PC-9 (cell line): ENCODE measurements at regions of chr12 and their contacts with region 1.

Region 1: GRCh38 chr12:52980693-52981423 is 25.4 kb upstream of the EIF4B start:
- DNase-seq: peak; percentile 87 to 91
- H3K4me3 ChIP-seq: no peak overlapping the region
- H3K27ac ChIP-seq: no peak overlapping the region
- H3K4me1 ChIP-seq: peaks cover 26% of the 10 kb centered on the region
- H3K27me3 ChIP-seq: no peaks in the 10 kb centered on the region
- CTCF ChIP-seq: peak; percentile 98

Region 2: GRCh38 chr12:52372216-52373154 is 608.4 kb before region 1 on chr12:
- CTCF ChIA-PET with region 1: no interaction called
- POLR2A ChIA-PET with region 1: no interaction called
- intact Hi-C with region 1: loop called (anchors 1 kb)
- DNase-seq: peak; percentile 73 to 84
- H3K4me3 ChIP-seq: no peak overlapping the region
- H3K27ac ChIP-seq: no peak overlapping the region
- H3K4me1 ChIP-seq: peaks cover 9% of the 10 kb centered on the region
- H3K27me3 ChIP-seq: no peaks in the 10 kb centered on the region
- CTCF ChIP-seq: peak; percentile 90

Region 3: DNA sequence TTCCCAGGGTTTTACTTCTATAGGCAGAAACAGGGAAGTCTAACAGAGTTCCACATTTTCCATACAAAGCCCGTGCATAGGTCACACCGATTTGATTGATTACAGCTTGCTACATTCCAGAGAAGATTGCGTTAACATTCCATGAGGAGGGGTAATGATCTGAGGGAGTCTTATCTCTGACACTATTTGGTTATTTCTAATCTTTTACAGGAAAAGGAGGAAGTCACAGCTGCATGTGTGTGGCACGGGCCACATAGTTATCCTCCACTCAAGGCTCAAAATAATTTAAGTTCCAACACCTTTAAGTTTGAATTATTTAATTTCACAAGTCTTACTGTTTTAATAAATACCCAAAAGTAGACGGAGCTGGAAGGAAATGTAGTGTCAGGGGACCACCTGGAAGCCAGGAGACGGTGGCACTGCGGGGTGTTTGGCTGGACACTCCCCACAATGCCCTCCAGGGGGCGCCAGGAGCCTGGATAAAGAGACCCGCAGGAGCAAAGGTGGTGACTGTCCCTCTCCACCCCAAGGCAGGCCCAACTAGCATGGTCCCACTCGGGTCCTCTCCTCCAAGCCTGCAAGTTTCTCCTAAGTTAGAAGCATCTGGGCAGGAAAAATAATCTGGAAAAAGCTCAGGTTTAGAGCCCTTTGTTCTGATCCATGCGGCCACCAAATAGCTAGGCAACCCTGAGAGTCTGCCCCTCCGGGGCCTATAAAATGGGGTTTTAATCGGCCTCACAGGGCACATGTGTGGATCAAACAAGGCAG is 96.1 kb before region 1 on chr12:
- CTCF ChIA-PET with region 1: interaction called, 59 read pairs
- POLR2A ChIA-PET with region 1: interaction called, 5 read pairs
- intact Hi-C with region 1: loop called (anchors 1 kb)
- DNase-seq: peak in 1 of 2 experiments; percentile 76
- H3K4me3 ChIP-seq: no peak overlapping the region
- H3K27ac ChIP-seq: no peak overlapping the region
- H3K4me1 ChIP-seq: peaks cover 6% of the 10 kb centered on the region
- H3K27me3 ChIP-seq: no peaks in the 10 kb centered on the region
- CTCF ChIP-seq: peak; percentile 97

Region 4: GRCh38 chr12:53014709-53015108 is 33.9 kb after region 1 on chr12:
- CTCF ChIA-PET with region 1: no interaction called
- POLR2A ChIA-PET with region 1: interaction called, 10 read pairs
- intact Hi-C with region 1: no loop called
- DNase-seq: no peak
- H3K4me3 ChIP-seq: no peak overlapping the region
- H3K27ac ChIP-seq: no peak overlapping the region
- H3K4me1 ChIP-seq: peaks cover 22% of the 10 kb centered on the region
- H3K27me3 ChIP-seq: no peaks in the 10 kb centered on the region
- CTCF ChIP-seq: no peak